ENCODE measurements at regions of chr9 and their contacts with region 1.

Region 1: GRCh38 chr9:36407122-36407723 is 7.2 kb upstream of the RNF38 start:
- DNase-seq: peak; percentile 50
- ATAC-seq: peak; percentile 94
- H3K4me3 ChIP-seq: no peak overlapping the region
- H3K27ac ChIP-seq: no peak overlapping the region
- H3K4me1 ChIP-seq: peaks cover 12% of the 10 kb centered on the region
- H3K27me3 ChIP-seq: no peaks in the 10 kb centered on the region
- CTCF ChIP-seq: peak; percentile 94

Region 2: GRCh38 chr9:36470643-36471290 is 63.5 kb after region 1 on chr9:
- intact Hi-C with region 1: no loop called
- DNase-seq: peak; percentile 73
- ATAC-seq: peak; percentile 92 to 98
- H3K4me3 ChIP-seq: peak overlapping the region; percentile 49
- H3K27ac ChIP-seq: peak overlapping the region; percentile 84
- H3K4me1 ChIP-seq: peaks cover 12% of the 10 kb centered on the region
- H3K27me3 ChIP-seq: no peaks in the 10 kb centered on the region
- CTCF ChIP-seq: no peak

Region 3: DNA sequence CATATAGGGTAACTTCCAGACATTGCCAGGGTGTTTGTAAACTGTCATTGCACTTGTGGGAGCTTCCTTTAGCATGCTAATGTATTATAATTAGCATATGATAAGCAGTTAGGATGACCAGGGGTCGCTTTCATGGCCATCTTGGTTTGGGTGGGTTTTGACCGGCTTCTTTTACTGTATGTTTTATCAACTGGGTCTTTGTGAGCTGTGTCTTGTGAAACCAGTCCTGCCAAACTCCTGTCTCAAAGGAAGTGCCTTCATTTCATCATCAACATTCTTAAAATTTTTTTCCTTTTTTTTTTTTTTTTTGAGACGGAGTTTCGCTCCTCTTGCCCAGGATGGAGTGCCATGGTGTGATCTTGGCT is 153.6 kb after region 1 on chr9:
- intact Hi-C with region 1: loop called (anchors 5 kb)
- DNase-seq: no peak
- ATAC-seq: no peak
- H3K4me3 ChIP-seq: no peak overlapping the region
- H3K27ac ChIP-seq: no peak overlapping the region
- H3K4me1 ChIP-seq: no peaks in the 10 kb centered on the region
- H3K27me3 ChIP-seq: no peaks in the 10 kb centered on the region
- CTCF ChIP-seq: no peak

Measured in lower lobe of right lung (tissue), 2 donors.